ENCODE measurements at regions of chr17 and their contacts with region 1.

Region 1: DNA sequence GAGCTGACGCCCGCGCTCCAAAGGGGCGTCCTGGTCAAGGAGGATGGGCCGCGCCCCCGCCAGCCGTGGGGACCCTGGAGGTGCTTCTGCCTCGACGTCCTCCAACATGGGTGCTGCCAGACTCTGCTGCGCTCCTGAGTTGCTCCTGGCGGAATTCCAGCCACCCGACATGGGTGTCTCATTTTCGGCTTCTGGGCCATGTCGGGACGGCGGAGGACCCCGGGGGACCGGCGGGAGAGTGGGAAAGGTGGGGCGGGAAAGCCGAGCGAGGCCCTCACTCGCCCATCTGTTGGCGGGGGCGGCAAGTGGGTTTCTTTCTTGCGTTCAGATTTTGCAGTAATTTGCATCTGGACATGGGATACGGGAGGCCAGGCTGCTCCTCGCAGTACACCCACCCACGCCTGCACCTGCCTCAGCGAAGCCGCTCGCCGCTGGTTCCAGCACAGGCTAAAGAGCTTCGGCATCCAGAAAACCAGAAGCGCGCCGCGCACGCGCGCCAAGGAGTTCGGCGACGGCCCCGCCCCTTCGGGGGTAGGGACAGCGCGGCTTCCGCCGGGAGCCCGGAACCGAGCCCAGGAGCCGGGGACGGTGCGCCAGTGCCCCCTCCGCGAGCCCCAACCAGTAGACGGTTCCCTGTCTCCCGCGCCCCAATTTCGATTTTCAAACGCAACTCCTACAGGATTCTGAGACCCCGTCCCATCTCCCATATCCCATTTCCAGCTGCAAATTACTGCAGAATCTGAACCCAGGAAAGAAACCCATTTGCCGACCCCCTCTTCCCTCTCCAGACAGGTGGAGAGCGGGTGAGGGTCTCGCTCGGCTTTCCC is at the start of gene ARMC7:
- DNase-seq: peak; percentile 90 to 97 (median 92)
- ATAC-seq: peak; percentile 80 to 92 (median 90)
- H3K4me3 ChIP-seq: peak within 1 kb of the TSS; percentile 78 to 98 (median 92)
- H3K27ac ChIP-seq: peak within 1 kb of the TSS in 11 of 12 donors; percentile 66 to 91 (median 81)
- H3K4me1 ChIP-seq: peaks cover 0 to 44% (median 28%) of the 10 kb centered on the region in 12 donors
- H3K27me3 ChIP-seq: no peaks in the 10 kb centered on the region
- CTCF ChIP-seq: peak in 2 of 12 donors; percentile 6 to 21
- POLR2A ChIP-seq: peak in 1 of 2 donors; percentile 88
- total RNA-seq, gene ARMC7: 3.9 to 7.9 (median 5.2) TPM

Region 2: GRCh38 chr17:75059369-75060345 is 50.0 kb before region 1 on chr17:
- intact Hi-C with region 1: loop called in 3 of 10 experiments (anchors 2 to 5 kb)
- DNase-seq: peak in 2 of 5 donors; percentile 50 to 53
- ATAC-seq: peak; percentile 62 to 87 (median 78)
- H3K4me3 ChIP-seq: no peak overlapping the region
- H3K27ac ChIP-seq: peak overlapping the region; percentile 6 to 87 (median 59)
- H3K4me1 ChIP-seq: peaks cover 0 to 21% (median 10%) of the 10 kb centered on the region in 12 donors
- H3K27me3 ChIP-seq: no peaks in the 10 kb centered on the region
- CTCF ChIP-seq: peak in 11 of 12 donors; percentile 26 to 68 (median 41)
- POLR2A ChIP-seq: no peak

Region 3: GRCh38 chr17:75077496-75078283 is 31.9 kb before region 1 on chr17:
- intact Hi-C with region 1: loop called in 3 of 10 experiments (anchors 5 kb)
- DNase-seq: peak; percentile 84 to 90 (median 87)
- ATAC-seq: peak; percentile 82 to 92 (median 92)
- H3K4me3 ChIP-seq: peak overlapping the region; percentile 4 to 64 (median 51)
- H3K27ac ChIP-seq: peak overlapping the region; percentile 71 to 93 (median 85)
- H3K4me1 ChIP-seq: peaks cover 0 to 39% (median 21%) of the 10 kb centered on the region in 12 donors
- H3K27me3 ChIP-seq: no peaks in the 10 kb centered on the region
- CTCF ChIP-seq: peak in 11 of 12 donors; percentile 5 to 60 (median 39)
- POLR2A ChIP-seq: no peak

Region 4: GRCh38 chr17:75173526-75173925 is 63.9 kb after region 1 on chr17:
- intact Hi-C with region 1: loop called in 7 of 10 experiments (anchors 2 to 10 kb)
- DNase-seq: no peak
- ATAC-seq: no peak
- H3K4me3 ChIP-seq: no peak overlapping the region
- H3K27ac ChIP-seq: no peak overlapping the region
- H3K4me1 ChIP-seq: peaks cover 0 to 20% (median 6%) of the 10 kb centered on the region in 12 donors
- H3K27me3 ChIP-seq: no peaks in the 10 kb centered on the region
- CTCF ChIP-seq: no peak
- POLR2A ChIP-seq: no peak

Region 5: DNA sequence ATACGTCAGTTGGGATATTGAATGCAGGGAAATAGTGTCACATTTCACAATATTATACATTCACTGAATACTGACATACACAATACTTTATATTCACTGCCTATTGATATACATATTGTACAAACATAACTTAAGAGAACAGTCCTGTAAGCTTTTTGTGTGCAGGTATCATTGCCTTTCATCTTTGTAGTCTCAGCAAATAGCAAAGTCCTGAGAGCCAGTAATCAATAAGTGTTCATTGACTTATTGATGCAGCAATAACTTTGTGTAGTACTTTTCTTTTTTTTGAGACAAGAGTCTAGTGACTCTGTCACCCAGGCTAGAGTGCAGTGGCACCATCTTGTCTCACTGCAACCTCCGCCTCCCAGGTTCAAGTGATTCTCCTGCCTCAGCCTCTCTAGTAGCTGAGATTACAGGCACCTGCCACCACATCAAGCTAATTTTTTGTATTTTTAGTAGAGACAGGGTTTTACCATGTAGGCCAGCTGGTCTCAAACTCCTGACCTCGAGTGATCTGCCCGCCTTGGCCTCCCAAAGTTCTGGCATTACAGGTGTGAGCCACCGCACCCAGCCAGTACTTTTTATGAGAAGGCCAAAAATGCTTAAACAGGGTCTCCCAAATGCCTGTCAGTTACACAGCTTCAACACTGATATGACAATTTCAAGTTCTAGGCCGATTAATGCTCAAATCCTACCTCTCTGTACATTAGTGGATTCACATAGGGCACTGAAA is 90.4 kb after region 1 on chr17:
- intact Hi-C with region 1: loop called in 8 of 10 experiments (anchors 1 to 10 kb)
- DNase-seq: no peak
- ATAC-seq: no peak
- H3K4me3 ChIP-seq: no peak overlapping the region
- H3K27ac ChIP-seq: no peak overlapping the region
- H3K4me1 ChIP-seq: peaks cover 0 to 11% (median 6%) of the 10 kb centered on the region in 12 donors
- H3K27me3 ChIP-seq: no peaks in the 10 kb centered on the region
- CTCF ChIP-seq: no peak
- POLR2A ChIP-seq: no peak

Region 6: DNA sequence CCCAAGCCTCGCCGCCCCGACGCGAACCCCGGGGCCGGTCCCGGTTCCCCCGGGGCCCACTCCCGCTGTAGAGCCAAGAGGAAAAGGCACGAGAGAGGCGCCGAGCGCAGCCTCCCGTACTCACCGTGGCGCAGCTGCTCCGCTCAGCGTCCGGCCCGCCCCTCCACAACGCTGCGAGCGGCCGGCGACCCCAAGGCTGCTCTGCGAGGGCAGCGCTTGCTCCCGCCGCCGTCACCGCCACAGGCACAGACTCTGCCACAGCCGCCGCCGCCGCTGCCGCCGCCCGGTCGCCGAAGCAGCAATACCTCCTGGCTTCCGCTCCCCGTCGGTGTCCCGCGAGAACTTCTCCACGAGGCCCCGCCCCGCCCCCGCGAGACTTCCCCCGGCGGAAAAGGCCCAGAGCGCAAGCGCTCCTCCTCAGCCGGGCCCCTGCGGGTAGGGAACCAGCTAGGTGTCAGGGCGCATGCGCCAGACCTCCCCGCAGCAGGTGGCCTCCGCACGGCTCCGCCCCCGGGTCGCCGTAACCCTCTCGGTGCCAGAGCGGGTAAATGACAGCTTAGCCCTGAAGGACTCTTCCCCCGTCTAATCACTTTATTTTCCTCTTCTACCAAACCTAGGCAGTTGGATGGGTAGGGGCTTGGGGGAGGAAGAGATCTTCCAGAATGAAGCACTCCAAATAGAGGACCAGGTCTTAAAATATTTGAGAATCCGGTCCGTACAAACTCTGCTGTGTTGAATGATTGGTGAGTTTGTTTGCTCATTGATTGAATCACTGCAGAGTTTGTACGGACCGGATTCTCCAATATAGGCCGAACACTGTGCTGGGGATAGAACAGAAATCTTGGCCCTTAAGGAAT is 296.0 kb after region 1 on chr17 and contains the start of gene GRB2:
- intact Hi-C with region 1: loop called in 2 of 10 experiments (anchors 5 to 10 kb)
- DNase-seq: peak; percentile 99 to 100 (median 99)
- ATAC-seq: peak; percentile 98 to 99 (median 98)
- H3K4me3 ChIP-seq: peak within 1 kb of the TSS; percentile 67 to 100 (median 96)
- H3K27ac ChIP-seq: peak within 1 kb of the TSS; percentile 70 to 99 (median 93)
- H3K4me1 ChIP-seq: peaks cover 2 to 45% (median 26%) of the 10 kb centered on the region in 12 donors
- H3K27me3 ChIP-seq: no peaks in the 10 kb centered on the region
- CTCF ChIP-seq: peak in 1 of 12 donors; percentile 19
- POLR2A ChIP-seq: peak in 1 of 2 donors; percentile 90
- total RNA-seq, gene GRB2: 37.2 to 145 (median 67.7) TPM

Region 7: DNA sequence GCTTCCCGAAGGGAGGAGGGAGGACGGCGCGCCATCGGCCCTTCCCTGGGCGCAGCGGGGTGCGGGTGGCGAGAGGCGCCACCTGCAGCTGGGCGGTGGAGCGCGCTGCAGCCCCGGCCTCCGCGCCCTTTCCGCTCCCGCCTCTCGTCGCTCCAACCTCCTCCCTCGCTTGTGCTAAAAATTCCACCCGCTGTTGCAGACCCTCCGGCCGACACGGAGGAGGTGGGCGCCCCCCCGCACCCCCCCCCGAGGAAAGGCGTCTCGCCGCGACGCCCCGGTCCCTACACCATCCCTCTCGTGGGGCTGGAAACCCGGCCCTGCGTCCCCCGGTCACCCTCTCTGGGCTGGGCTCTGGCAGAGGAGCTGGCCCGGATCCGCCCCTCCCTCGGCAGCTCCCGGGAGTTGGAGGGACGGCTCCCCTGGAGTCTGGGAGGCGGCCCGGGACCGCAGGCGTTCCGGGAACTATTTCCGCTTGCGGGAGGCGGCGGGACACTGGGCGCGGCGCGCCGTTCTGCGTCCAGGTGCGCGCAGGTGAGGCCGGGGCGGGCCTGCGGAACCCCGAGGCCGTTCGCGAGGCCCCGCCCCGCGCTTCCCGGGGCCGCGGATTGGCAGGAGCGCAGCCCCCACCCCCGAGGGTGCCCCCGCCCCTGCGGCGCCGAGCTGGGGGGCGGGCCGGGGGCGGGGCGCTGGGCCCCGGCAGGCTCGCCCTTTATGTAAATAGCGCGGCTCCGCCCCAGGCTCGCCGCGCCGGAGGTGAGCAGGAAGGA is 415.5 kb after region 1 on chr17 and contains the start of gene LLGL2:
- intact Hi-C with region 1: no loop called
- DNase-seq: peak; percentile 60 to 89 (median 75)
- ATAC-seq: peak; percentile 35 to 86 (median 82)
- H3K4me3 ChIP-seq: peak within 1 kb of the TSS; percentile 28 to 83 (median 71)
- H3K27ac ChIP-seq: peak within 1 kb of the TSS in 11 of 12 donors; percentile 27 to 78 (median 72)
- H3K4me1 ChIP-seq: peaks cover 0 to 22% (median 12%) of the 10 kb centered on the region in 12 donors
- H3K27me3 ChIP-seq: peaks cover 0 to 6% (median 0%) of the 10 kb centered on the region in 9 donors
- CTCF ChIP-seq: peak; percentile 31 to 69 (median 50)
- POLR2A ChIP-seq: no peak
- total RNA-seq, gene LLGL2: 1.8 to 5.9 (median 3.4) TPM

Measured in heart left ventricle (tissue), 16 donors.